ENCODE measurements at regions of chr9 and their contacts with region 1.

Region 1: DNA sequence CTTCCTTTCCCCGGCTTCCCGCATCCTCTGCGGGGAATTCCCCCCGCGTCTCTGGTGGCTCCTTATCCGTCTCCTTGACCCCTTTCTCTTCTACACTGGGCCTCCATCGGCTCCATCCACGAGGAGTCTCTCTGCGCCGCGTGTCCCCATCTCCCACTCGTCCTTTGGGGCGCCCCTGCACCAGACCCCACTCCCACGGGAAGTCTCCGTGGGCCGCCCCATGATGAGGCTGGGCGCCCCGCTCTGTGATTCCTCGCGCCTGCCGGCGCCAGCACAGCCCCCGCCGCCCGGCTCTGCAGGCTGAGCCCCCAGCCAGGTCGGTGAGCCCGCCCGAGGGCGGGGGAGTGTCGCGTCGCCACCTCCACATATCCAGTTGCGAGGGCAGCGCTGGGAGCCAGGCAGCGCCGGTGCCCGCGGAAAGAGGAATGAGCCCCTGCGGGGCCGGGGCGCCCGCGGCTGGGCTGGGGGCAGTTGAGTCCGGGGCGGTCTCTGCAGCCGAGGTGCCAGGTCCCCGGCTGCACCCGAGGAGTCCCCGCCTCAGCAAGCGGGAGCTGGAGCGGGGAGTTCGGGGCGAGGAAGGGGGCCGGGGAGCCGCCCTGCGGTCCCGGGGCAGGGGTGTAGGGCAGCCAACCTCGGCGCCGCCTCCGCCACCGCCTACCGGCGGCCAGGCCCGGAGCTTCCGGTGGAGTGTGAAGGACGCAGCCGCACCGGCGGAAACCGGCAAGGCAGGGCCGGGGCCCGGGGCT is 2.1 kb upstream of the TRAF1 start:
- DNase-seq: peak; percentile 86 to 89 (median 87)
- ATAC-seq: peak; percentile 85 to 96 (median 94)
- H3K4me3 ChIP-seq: peak overlapping the region; percentile 80 to 88 (median 85)
- H3K27ac ChIP-seq: peak overlapping the region; percentile 81 to 88 (median 87)
- H3K4me1 ChIP-seq: peaks cover 0 to 5% (median 0%) of the 10 kb centered on the region in 4 donors
- H3K27me3 ChIP-seq: no peaks in the 10 kb centered on the region
- CTCF ChIP-seq: peak in 3 of 4 donors; percentile 21 to 38 (median 24)
- POLR2A ChIP-seq: peak; percentile 85

Region 2: GRCh38 chr9:120875954-120876841 is 52.5 kb before region 1 on chr9:
- intact Hi-C with region 1: loop called in 1 of 2 experiments (anchors 10 kb)
- DNase-seq: peak; percentile 76 to 84 (median 78)
- ATAC-seq: peak; percentile 67 to 76 (median 74)
- H3K4me3 ChIP-seq: peak overlapping the region; percentile 55 to 66 (median 57)
- H3K27ac ChIP-seq: peak overlapping the region; percentile 62 to 79 (median 69)
- H3K4me1 ChIP-seq: peaks cover 0 to 3% (median 0%) of the 10 kb centered on the region in 4 donors
- H3K27me3 ChIP-seq: no peaks in the 10 kb centered on the region
- CTCF ChIP-seq: no peak
- POLR2A ChIP-seq: peak; percentile 51